ENCODE measurements at regions of chr19 and their contacts with region 1.

Region 1: GRCh38 chr19:8615813-8616596 is 5.5 kb upstream of the ADAMTS10 start:
- H3K4me3 ChIP-seq: no peak overlapping the region
- H3K27ac ChIP-seq: no peak overlapping the region
- H3K4me1 ChIP-seq: no peaks in the 10 kb centered on the region
- CTCF ChIP-seq: peak; percentile 71

Region 2: GRCh38 chr19:8536282-8536681 is 79.7 kb before region 1 on chr19:
- CTCF ChIA-PET with region 1: no interaction called
- POLR2A ChIA-PET with region 1: no interaction called
- H3K4me3 ChIP-seq: no peak overlapping the region
- H3K27ac ChIP-seq: no peak overlapping the region
- H3K4me1 ChIP-seq: no peaks in the 10 kb centered on the region
- CTCF ChIP-seq: no peak

Region 3: DNA sequence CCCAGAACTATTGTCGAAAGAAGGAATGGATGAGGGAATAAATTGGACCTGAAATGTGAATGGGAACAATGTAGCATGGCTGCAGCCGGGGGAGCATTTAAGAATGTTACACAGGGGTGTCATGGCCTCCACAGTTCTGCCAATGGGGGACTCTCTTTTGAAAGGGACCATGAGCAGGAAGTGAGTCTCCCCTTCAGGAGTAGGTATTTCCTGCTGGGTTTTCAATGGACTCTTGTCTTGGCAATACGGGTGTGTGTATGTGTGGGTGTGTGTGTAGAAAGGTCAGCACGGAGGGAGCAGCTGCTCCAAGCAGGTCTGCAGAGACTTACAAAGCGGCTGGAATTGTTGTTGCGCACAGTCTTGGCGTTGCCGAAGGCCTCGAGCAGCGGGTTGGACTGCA is 63.2 kb before region 1 on chr19:
- CTCF ChIA-PET with region 1: no interaction called
- POLR2A ChIA-PET with region 1: no interaction called
- H3K4me3 ChIP-seq: no peak overlapping the region
- H3K27ac ChIP-seq: no peak overlapping the region
- H3K4me1 ChIP-seq: no peaks in the 10 kb centered on the region
- CTCF ChIP-seq: no peak

Region 4: DNA sequence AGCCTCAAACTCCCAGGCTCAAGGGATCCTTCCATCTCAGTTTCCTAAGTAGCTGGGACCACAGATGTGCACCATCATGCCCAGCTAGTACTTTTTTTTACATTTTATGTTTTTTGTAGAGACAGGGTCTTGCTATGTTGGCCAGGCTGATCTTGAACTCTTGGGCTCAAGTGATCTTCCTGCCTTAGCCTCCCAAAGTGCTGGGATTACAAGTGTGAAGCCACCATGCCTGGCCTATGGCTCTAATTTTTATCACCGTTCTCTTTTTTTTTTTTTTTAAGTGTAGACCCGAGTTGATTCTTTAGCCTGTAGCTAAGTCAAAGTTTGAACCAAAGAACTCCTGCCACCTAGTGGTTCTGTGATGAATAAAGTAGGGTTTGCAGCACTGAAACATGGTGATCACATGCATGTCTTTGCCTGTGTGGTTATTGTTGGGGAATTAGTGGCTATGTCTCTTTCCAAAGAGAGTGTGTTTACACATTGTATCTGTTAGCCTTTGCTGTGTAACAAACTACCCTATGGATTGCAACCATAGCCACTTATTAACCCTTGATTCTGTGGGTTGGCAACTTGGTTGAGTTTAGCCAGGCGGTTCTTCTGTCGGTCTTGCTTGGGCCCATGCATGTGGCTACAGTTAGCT is 26.0 kb after region 1 on chr19:
- CTCF ChIA-PET with region 1: interaction called, 26 read pairs
- POLR2A ChIA-PET with region 1: interaction called, 3 read pairs
- H3K4me3 ChIP-seq: no peak overlapping the region
- H3K27ac ChIP-seq: no peak overlapping the region
- H3K4me1 ChIP-seq: no peaks in the 10 kb centered on the region
- CTCF ChIP-seq: no peak

Region 5: GRCh38 chr19:8695501-8695900 is 79.5 kb after region 1 on chr19:
- CTCF ChIA-PET with region 1: interaction called, 18 read pairs
- POLR2A ChIA-PET with region 1: no interaction called
- H3K4me3 ChIP-seq: no peak overlapping the region
- H3K27ac ChIP-seq: no peak overlapping the region
- H3K4me1 ChIP-seq: no peaks in the 10 kb centered on the region
- CTCF ChIP-seq: no peak

Region 6: DNA sequence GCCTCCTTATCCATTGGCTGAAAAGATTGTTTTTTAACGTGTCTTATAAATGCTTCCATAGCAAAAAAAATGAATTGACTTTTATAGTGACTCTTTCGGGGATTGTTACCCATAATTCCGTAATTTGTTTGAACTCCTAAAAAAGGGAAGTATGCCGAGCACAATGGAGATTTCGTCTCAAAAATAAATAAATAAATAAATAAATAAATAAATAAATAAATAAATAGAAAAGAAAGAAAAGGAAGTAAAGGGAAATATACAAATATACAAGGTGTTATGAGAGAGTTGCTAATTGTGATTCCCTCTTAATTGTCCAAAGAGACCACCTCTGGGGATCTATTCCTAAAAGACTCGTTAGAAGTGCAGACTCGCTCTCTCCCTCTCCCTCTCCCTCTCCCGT is 122.4 kb after region 1 on chr19:
- CTCF ChIA-PET with region 1: no interaction called
- POLR2A ChIA-PET with region 1: no interaction called
- H3K4me3 ChIP-seq: no peak overlapping the region
- H3K27ac ChIP-seq: no peak overlapping the region
- H3K4me1 ChIP-seq: no peaks in the 10 kb centered on the region
- CTCF ChIP-seq: no peak